SK-N-SH (cell line): ENCODE measurements at regions of chr2 and their contacts with region 1.

Region 1: GRCh38 chr2:6917071-6917760 is at the start of gene RNF144A:
- DNase-seq: peak; percentile 99
- H3K4me3 ChIP-seq: peak within 1 kb of the TSS; percentile 79 to 90
- H3K27ac ChIP-seq: peak within 1 kb of the TSS; percentile 57 to 89; a peak in 3 of 4 replicates
- H3K4me1 ChIP-seq: peaks cover 6 to 39% of the 10 kb centered on the region in 2 experiments; a peak in 2 of 4 replicates
- H3K27me3 ChIP-seq: no peaks in the 10 kb centered on the region
- CTCF ChIP-seq: peak; percentile 57
- EP300 ChIP-seq: no peak
- RAD21 ChIP-seq: no peak; the same call in 1 of the 2 replicates
- polyA plus RNA-seq, gene RNF144A: 15.6 and 17.3 TPM in 2 replicates

Region 2: DNA sequence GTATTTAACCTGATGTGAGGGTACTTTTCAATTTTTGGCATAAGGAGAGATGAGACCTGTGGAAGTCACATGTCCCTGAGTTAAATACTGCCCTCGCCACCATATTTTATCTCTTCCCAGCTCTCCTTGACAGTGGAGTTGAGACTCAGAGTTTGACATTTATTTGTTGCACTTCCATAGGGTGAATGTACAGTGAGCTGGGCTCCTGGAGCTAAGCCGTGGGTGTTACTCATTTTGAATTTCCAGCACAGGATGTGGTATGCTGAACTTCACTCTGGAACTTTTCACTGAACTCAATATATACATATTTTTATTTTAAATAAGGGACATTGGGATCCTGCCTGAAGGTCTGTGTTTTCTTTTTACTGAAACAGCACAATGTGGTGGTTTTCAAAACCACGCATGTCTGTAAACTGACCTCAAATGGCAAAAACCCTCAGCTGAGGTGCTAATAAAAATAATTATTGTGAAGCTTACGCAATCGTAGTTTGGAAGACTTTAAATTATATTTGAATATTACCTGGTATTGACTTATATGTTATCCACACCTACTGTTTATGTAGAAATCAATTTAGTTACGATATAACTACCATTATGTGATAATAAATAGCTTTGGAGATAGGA is 12.1 kb after region 1 on chr2:
- CTCF ChIA-PET with region 1: interaction called, 25 read pairs
- POLR2A ChIA-PET with region 1: no interaction called
- DNase-seq: no peak
- H3K4me3 ChIP-seq: no peak overlapping the region
- H3K27ac ChIP-seq: no peak overlapping the region; a peak in 1 of 4 replicates
- H3K4me1 ChIP-seq: peaks cover 0 to 56% of the 10 kb centered on the region in 2 experiments; a peak in 2 of 4 replicates
- H3K27me3 ChIP-seq: no peaks in the 10 kb centered on the region
- CTCF ChIP-seq: no peak
- EP300 ChIP-seq: no peak
- RAD21 ChIP-seq: no peak

Region 3: DNA sequence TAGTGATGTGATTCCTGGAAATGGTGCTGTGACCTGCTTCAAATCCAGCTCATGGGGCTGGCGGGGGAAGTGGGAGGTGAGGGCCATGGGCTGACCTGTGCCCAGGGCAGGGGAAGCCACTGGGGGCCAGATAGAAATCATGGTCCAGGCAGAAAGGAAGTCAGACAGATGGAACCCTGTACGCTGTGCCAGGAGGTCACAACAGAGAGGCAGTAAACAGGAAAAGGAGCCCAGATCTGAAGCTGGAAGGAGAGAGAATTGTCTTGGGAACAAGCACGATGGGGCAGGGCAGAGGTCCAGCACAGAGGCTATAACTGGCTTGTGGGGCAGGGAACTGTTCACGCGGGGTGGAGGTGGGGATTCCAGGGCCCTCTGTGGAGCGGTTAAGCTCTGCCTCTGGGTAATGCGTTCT is 76.0 kb after region 1 on chr2:
- CTCF ChIA-PET with region 1: interaction called, 23 read pairs
- POLR2A ChIA-PET with region 1: interaction called, 3 read pairs
- DNase-seq: peak; percentile 83
- H3K4me3 ChIP-seq: peak overlapping the region in 1 of 2 experiments; percentile 4; a peak in 1 of 4 replicates
- H3K27ac ChIP-seq: peak overlapping the region in 1 of 2 experiments; percentile 100; a peak in 3 of 4 replicates
- H3K4me1 ChIP-seq: peaks cover 0 to 46% of the 10 kb centered on the region in 2 experiments; a peak in 2 of 4 replicates
- H3K27me3 ChIP-seq: no peaks in the 10 kb centered on the region
- CTCF ChIP-seq: no peak
- EP300 ChIP-seq: no peak; a peak in 1 of 4 replicates
- RAD21 ChIP-seq: no peak; the same call in 1 of the 2 replicates

Region 4: DNA sequence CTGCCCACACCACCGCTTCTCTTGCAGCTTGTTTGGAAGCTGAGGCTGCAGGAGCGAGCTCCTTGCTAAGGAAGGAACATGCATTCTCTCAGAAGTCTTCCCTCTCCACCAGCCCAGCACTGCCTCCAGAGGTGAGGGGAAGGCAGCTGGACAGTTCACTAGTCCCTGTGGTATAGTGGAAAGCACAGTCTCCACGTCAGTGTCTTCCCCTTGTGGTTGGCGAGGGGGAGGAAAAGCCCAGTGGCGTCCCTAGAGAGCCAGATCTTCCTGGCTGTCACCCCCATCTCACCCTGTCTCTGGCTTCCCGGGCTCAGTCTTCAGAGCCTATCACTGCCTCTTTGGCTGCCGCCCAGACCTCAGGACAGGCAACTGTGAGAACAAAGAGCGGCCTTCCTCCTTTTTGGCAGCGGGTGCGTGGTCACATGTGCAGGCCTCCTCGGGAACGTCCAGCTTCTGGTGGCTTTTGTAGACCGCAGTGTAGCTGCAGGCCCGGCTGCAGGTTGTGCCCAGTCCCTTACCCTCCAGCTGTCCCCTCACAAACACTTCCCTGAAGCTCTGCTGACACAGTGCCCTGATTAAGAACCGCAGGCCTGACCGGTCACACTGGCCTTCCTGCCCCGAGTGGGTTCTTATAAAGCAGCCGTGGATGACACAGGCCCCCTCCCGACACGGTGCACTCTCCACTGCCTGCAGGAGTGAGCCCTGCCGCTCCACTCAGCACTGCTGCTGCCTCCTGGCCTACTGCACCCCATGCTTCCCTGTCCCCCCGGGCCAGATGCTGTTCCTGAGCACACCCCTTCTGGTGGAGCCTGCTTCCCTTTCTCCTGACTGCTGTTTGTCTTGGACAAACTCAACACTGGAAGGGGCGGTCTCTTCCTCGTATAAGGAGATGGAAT is 90.9 kb after region 1 on chr2:
- CTCF ChIA-PET with region 1: interaction called, 437 read pairs
- POLR2A ChIA-PET with region 1: interaction called, 6 read pairs
- DNase-seq: peak; percentile 84
- H3K4me3 ChIP-seq: no peak overlapping the region
- H3K27ac ChIP-seq: peak overlapping the region; percentile 99
- H3K4me1 ChIP-seq: peaks cover 34 to 78% of the 10 kb centered on the region in 2 experiments
- H3K27me3 ChIP-seq: no peaks in the 10 kb centered on the region
- CTCF ChIP-seq: peak; percentile 63
- EP300 ChIP-seq: peak; percentile 61 to 95
- RAD21 ChIP-seq: peak; percentile 67

Region 5: DNA sequence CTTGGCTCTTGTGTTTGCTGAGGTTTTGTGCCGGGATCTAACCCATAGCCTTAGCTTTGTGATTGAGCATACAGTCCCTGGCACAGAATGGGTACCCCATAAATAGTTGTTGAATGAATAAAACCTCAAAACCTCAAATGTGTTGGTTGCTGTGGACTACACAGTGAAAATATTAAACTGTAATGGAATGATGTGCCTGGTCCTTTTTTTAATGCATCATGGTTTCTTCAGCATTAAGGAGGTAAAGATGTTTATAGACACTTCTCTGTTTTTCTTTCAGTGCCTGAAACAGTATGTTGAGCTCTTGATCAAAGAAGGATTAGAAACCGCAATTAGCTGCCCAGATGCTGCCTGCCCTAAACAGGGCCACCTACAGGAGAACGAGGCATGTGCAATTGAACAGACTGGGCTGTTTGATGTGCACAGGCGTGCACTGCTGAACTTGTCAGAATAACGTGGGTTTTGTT is 97.0 kb after region 1 on chr2:
- CTCF ChIA-PET with region 1: interaction called, 437 read pairs
- POLR2A ChIA-PET with region 1: interaction called, 6 read pairs
- DNase-seq: peak; percentile 63
- H3K4me3 ChIP-seq: peak overlapping the region in 1 of 2 experiments; percentile 3; a peak in 1 of 4 replicates
- H3K27ac ChIP-seq: peak overlapping the region; percentile 99
- H3K4me1 ChIP-seq: peaks cover 46 to 94% of the 10 kb centered on the region in 2 experiments
- H3K27me3 ChIP-seq: no peaks in the 10 kb centered on the region
- CTCF ChIP-seq: peak; percentile 80
- EP300 ChIP-seq: no peak
- RAD21 ChIP-seq: peak; percentile 71

Region 6: GRCh38 chr2:7031547-7032245 is 114.5 kb after region 1 on chr2:
- CTCF ChIA-PET with region 1: interaction called, 80 read pairs
- POLR2A ChIA-PET with region 1: interaction called, 6 read pairs
- DNase-seq: no peak
- H3K4me3 ChIP-seq: no peak overlapping the region
- H3K27ac ChIP-seq: no peak overlapping the region
- H3K4me1 ChIP-seq: peaks cover 0 to 22% of the 10 kb centered on the region in 2 experiments; a peak in 1 of 4 replicates
- H3K27me3 ChIP-seq: no peaks in the 10 kb centered on the region
- CTCF ChIP-seq: no peak
- EP300 ChIP-seq: no peak
- RAD21 ChIP-seq: no peak

Region 7: DNA sequence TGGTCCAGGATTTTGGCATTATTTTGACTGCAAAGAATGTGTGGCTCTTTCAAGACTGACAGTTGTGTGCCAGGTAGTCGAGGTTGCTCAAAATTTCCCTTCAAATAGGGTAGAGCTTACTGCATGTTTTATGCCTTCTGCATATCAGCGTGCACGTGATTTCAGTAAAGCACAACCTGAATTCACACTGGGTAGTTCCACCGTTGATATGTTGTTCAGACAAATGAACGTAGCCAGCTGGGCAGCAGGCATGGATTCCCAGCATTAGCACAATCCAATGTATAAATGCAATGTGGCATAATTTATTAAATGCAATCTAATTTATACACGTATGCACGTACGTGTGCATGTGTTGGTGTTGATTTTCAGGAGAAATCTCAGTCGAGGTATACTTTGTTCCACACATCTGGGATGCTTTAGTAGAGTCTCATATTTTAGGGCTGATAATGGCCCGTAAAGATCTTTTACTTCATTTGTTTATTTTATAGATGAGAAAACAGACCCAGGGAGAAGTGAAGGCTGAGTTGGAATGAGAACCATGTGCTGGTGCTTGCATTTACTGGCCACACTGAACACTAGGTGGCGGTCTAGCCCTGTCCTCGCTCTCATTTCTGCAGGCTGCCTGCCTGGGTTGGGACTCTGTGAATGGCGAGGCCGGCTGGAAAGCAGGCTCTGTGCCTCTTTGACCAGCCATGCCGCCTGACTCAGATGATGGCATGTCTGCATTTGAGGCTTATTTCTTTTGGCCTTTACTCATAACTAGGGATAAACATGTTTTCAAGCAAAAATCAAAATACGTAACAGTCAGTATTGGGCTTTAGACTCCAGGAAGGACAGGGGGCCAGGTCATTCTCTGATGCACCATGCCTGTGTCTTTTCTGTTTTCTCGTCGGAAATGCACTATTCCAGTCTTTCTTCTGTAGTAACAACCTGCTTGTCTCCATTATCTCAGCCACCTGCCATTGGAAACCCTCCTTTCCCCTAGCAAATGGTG is 120.4 kb after region 1 on chr2:
- CTCF ChIA-PET with region 1: interaction called, 80 read pairs
- POLR2A ChIA-PET with region 1: interaction called, 6 read pairs
- DNase-seq: peak; percentile 87
- H3K4me3 ChIP-seq: no peak overlapping the region
- H3K27ac ChIP-seq: peak overlapping the region in 1 of 2 experiments; percentile 31; a peak in 1 of 4 replicates
- H3K4me1 ChIP-seq: peaks cover 0 to 29% of the 10 kb centered on the region in 2 experiments; a peak in 2 of 4 replicates
- H3K27me3 ChIP-seq: no peaks in the 10 kb centered on the region
- CTCF ChIP-seq: peak; percentile 91
- EP300 ChIP-seq: no peak
- RAD21 ChIP-seq: peak; percentile 98